Testis (tissue), 5 donors: ENCODE measurements at regions of chr13 and their contacts with region 1.

Region 1: GRCh38 chr13:30802953-30803478 is 67.7 kb downstream of the ALOX5AP start:
- DNase-seq: peak; percentile 94
- H3K4me3 ChIP-seq: peak overlapping the region; percentile 40 to 68
- H3K27ac ChIP-seq: peak overlapping the region; percentile 32 to 69
- H3K4me1 ChIP-seq: peaks cover 17% of the 10 kb centered on the region
- H3K27me3 ChIP-seq: no peaks in the 10 kb centered on the region
- CTCF ChIP-seq: peak; percentile 88 to 90 (median 88)
- POLR2A ChIP-seq: no peak

Region 2: GRCh38 chr13:30569901-30570576 is 233.0 kb before region 1 on chr13:
- intact Hi-C with region 1: loop called (anchors 5 kb)
- DNase-seq: peak; percentile 51
- H3K4me3 ChIP-seq: no peak overlapping the region
- H3K27ac ChIP-seq: no peak overlapping the region
- H3K4me1 ChIP-seq: peaks cover 4% of the 10 kb centered on the region
- H3K27me3 ChIP-seq: no peaks in the 10 kb centered on the region
- CTCF ChIP-seq: no peak
- POLR2A ChIP-seq: no peak

Region 3: DNA sequence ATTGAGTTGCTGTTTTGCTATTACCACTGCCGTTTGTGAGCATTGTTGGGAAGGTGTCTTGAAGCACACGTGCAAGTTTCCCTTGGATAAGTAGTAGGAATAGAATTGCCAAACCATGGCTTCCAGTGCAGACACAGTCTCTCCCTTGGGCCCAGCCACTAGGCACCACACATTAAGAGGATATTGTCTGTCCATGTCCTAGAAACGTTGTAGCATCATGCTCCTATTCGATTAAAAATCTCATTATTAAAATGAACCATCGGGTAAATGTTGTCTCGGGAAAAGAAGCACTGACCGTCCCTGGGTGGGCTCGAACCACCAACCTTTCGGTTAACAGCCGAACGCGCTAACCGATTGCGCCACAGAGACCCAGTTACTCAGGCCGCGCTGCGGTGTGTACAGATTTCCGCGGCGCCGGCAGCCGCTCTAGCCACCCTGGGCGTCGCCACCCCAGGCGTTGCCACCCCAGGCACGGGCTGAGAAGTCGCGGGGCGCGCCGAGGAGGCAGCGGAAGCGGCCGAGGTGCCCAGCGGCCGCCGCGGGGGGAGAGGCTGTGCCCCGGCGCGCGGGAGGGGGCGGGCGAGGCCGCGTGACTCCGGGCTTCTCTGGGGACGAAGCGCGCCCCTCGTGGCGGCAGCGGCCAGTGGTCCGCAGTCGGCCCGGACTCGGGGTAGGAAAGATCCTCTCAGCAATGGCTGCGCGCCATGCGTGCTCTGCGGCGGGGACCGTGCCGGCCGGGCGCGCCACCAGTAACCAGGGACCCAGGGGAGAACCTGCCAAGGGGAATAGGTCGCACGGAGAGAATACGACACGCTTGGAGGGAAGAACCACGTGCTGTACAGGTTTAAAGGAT is 129.1 kb before region 1 on chr13:
- intact Hi-C with region 1: loop called (anchors 10 kb)
- DNase-seq: peak; percentile 92
- H3K4me3 ChIP-seq: peak overlapping the region; percentile 51 to 64
- H3K27ac ChIP-seq: peak overlapping the region; percentile 6 to 87
- H3K4me1 ChIP-seq: peaks cover 3% of the 10 kb centered on the region
- H3K27me3 ChIP-seq: no peaks in the 10 kb centered on the region
- CTCF ChIP-seq: peak; percentile 61 to 69 (median 68)
- POLR2A ChIP-seq: no peak